ENCODE measurements at regions of chr2 and their contacts with region 1.

Region 1: DNA sequence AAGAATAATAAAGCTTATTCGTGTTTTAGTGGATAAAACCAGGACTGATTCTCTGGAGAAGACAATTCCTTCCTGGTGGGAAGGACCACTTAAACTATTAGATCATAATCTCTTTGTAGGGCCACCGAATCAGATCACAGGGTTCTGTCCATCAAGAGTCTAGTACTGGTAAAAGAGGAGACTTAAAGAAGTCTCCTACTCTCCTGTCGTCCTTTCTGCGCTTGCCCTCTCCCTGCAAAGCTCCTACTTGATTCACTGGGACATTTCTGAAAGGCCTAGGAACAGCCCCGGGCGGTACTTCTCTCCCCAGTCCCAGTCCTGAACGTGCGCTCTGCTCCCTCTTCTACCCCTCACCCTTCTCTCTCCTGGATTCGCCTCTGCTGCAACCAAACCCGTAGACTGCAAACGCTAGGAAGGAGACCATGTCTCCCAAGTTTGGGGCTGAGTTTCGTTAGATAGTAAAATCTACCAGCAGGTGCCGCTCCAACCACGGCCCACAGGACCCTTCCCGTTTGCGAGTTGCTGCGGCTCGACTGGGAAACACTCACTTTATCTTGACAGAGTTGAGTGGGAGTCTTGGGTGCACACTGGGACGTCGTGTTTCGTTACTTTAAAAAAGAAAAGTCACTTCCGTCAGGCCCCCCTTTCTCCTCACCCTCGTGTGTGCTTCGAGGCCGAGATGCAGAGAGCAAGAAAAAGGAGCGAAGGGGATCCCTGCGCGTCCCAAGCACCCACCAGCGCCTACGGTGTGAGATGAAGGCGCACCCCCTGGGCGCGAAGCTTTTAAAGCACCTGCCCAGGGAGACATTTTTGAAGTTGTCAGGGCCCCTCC is 923 bp downstream of the FIGLA start:
- DNase-seq: peak; percentile 80
- H3K4me3 ChIP-seq: peak overlapping the region; percentile 36
- H3K27ac ChIP-seq: no peak overlapping the region
- H3K4me1 ChIP-seq: peaks cover 3% of the 10 kb centered on the region
- H3K27me3 ChIP-seq: peaks cover 39% of the 10 kb centered on the region
- CTCF ChIP-seq: peak; percentile 89

Region 2: DNA sequence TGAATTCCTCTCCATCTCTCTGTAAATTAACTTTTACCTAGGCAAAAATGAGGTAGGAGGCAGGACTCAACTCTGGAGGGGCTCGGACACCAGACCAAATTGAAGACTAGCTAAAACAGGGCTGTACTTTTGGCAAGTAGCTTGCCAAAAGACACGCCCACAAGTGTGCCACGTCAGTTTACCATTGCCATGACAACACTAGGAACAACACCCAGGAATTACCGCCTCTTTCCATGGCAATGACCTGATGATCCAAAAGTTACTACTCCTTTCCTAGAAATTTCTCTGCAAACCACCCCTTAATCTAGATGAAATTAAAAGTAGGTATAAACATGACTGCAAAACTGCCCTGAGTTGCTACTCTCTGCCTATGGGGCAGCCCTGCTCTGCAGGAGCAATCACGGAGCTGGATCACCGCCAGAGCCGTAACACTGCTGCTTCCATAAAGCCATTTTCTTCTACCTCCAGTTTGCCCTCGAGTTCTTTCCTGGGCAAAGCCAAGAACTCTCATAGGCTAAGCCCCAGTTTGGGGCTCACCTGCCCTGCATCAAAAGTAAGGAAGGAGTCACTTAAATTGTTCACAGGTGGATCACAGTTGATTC is 421.7 kb before region 1 on chr2:
- CTCF ChIA-PET with region 1: no interaction called
- POLR2A ChIA-PET with region 1: no interaction called
- intact Hi-C with region 1: no loop called
- DNase-seq: peak; percentile 37
- H3K4me3 ChIP-seq: no peak overlapping the region
- H3K27ac ChIP-seq: no peak overlapping the region
- H3K4me1 ChIP-seq: no peaks in the 10 kb centered on the region
- H3K27me3 ChIP-seq: no peaks in the 10 kb centered on the region
- CTCF ChIP-seq: no peak

Region 3: DNA sequence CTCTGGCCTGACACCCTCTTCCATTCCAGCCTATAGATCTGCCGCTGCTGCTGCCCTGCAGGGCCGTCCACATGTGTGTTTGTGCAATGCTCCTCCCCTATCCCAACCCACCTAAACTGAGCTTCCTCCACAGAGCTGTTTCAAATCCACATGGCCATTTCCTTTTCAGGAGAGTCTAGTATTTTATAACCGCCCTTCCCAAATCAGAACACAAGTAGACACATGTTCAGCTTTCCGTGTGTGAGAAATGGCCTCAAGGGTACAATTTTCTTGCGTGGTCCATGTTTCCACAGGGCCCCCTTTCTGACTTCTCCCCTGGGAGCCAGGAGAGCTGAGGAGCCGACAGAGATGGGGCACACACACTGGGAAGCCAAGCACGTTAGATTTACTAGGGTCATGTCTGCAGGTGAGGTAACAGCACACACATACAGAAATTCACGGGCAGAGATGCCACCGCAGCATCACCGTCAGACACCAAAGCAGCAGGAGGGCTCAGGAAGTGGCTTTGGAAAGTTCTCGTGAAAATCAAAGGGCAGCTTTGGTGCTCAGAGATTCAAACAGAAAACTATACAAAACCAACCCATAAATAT is 133.0 kb before region 1 on chr2:
- CTCF ChIA-PET with region 1: no interaction called
- POLR2A ChIA-PET with region 1: no interaction called
- intact Hi-C with region 1: loop called (anchors 1 kb)
- DNase-seq: no peak
- H3K4me3 ChIP-seq: no peak overlapping the region
- H3K27ac ChIP-seq: no peak overlapping the region
- H3K4me1 ChIP-seq: no peaks in the 10 kb centered on the region
- H3K27me3 ChIP-seq: no peaks in the 10 kb centered on the region
- CTCF ChIP-seq: no peak

Measured in A673 (cell line).